G401 (cell line): ENCODE measurements at regions of chr2 and their contacts with region 1.

Region 1: DNA sequence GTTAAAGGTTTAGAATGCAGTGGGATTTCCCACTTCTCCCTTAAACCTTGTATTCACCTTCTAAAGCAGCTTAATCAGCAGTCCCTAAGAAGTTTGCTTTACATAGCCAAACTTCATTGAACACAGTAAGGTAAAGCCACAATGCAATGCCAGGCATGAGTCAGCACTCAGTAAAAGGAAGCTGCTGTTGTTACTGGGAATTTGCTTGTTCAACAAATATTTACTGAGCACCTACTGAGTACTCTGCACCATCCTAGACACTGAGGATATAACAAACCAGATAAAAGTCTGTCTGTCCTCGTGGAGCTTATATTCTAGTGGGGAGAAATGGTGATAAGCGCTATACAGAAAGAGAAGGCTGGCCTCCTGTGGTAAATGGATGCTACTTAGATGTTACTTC is 162.7 kb downstream of the PKP4 start:
- DNase-seq: no peak

Region 2: GRCh38 chr2:158556124-158556523 is 63.4 kb before region 1 on chr2:
- in situ Hi-C with region 1: no loop called
- DNase-seq: no peak

Region 3: DNA sequence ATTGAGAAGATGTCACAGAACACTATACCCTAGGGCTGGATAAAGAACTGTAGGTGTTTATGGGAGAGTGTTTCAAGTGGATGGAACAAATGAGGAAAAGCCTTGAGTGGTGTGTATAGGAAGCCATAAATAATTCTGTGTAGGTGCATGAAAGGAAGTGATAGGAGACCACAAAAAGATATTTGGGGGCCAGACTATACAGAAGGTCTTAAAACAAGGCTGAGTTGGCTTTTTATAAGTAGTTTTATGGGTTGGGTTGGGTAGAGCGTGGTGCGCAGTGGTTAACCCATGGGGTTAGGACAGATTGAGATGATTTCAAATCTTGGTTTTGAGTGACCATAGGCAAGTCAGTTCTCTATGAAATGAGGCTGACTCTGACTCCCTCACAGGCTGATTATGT is 52.3 kb before region 1 on chr2:
- in situ Hi-C with region 1: no loop called
- DNase-seq: no peak

Region 4: DNA sequence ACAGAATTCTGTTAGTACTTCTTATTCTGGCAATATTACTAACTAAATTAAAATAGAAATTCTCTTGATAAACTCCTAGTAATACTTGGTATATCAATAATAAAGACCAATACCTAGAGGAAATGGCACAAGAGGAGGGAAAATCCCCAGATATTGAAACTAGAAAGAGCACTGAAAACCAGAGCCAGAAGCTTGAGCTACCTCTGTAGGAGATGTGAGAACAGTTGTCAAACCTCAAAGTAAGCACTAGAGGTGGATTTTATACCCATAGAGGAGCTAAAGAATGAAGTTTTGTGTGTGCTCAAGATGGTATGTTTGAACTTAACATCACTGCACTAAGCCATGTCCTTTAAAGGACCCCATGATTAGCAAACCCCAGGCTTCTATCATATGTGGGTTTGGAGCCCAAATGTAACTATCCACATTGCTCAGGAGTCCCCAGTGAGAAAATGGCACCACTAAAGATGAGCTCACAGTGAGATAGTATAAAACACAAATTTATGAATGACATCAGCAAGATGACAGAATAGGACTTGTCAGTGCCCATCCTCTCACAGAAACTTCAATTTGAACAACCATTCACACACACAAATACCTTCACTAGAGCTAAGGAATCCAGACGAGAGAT is 40.7 kb before region 1 on chr2:
- in situ Hi-C with region 1: no loop called
- DNase-seq: no peak

Region 5: DNA sequence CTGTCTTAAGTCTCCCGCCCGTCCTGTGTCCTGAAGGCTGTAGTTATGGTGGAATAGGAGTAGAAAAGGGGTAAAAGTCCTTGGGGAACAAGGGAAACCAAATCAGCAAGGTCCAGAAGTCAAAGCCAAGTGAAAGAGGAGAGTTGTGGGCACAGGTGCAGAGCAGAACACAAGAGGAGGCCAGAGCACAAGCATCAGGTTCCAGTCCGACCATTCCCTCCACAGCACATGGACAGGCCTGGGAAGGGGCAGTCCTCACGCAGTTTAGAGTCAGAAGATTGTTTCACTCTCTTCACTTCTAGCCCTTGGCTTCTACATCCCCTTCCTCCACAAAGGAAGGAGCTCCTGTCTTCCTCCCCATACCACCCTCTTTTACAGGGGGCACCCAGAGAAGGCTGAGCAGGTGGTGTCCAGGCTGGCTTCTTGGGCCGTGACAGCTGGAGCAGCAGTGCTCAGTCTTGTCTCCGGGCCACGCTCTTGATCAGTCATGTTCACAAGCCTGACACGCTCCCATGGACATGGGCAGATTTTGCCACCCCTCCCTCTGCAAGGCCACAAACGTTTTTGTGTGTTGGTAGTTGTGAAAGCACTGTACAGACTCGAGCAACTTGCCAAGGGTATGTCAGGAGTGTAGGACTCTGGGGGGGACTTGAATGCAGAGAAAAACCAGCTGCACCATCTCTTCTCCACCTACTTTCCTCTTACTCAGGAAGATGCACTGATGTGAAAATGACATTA is 37.2 kb after region 1 on chr2:
- in situ Hi-C with region 1: loop called (anchors 5 kb)
- DNase-seq: no peak

Region 6: DNA sequence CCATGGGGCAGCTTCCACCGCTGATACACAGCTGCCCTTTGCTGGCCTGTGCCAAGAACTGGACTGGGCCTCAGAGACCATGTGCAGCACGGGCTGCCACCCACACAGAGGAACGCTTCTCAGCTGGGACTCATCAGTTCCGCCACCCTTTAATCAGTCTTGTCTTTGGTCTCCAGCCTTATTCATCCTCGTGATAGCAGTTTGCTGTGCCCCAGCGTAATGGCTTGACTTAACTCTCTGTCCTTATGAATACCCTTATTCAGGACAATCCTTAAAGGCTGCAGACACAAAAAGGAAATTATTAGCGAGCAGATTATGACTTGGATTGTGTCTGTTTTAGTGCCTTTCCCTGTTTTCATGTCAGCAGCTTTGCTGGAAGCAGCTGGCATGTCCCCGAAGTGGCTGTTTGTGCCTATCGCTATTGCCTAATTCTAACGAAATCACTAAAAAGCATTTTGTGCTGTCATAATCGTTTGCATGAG is 66.8 kb after region 1 on chr2:
- in situ Hi-C with region 1: no loop called
- DNase-seq: no peak